A549 (cell line): ENCODE measurements at regions of chr9 and their contacts with region 1.

Region 1: DNA sequence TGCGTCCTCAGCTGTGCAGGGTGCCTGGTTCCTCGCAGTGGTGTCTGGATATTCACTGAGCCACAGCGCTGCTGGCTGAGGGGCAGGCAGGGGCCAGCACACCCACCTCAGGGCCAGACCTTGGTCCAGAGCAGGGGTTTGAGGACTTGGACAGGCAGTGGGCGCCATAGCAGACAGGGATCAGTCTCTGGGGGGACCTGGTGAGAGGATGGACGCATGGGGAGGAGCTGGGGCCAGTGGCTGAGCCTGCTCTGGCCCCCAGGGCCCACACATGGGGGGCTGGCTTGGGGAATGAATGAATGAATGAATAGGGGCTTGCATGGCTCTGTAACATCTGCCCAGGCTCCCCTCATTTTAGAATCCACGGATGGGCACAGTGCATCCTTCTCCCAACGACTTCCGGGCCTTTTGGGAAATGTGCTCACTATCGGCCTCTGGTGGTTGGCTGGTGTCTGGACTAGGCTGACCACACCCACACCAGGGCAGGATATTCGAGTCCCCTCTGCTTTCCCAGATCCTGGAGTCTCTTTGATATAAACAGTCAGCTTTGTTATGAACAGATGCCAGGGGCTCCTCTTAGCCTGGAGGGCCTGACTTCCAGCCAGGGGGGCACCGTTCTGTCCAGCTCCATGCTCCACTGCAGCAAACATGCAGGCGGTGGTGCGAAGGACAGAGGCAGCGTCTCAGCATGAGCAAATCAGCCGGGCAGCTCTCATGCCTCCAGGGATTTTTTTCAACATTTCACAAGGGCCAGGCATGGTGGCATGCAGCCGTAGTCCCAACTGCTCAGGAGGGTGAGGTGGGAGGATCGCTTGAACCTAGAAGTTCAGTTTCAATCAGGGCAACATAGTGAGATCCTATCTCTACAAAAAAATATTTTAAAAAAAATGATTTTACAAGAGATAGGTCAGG is 62.6 kb downstream of the NEK6 start:
- DNase-seq: peak; percentile 64 to 91
- ATAC-seq: peak; percentile 91 to 95
- H3K4me3 ChIP-seq: no peak overlapping the region
- H3K27ac ChIP-seq: peak overlapping the region; percentile 46 to 70; a peak in 4 of 6 replicates
- H3K4me1 ChIP-seq: 0 out of 3 replicates have a peak, but pooled peaks cover 3% of the 10 kb centered on the region
- CTCF ChIP-seq: peak; percentile 78
- EP300 ChIP-seq: no peak
- POLR2A ChIP-seq: no peak
- RAD21 ChIP-seq: peak; percentile 70 to 74

Region 2: GRCh38 chr9:124257844-124258606 is 62.3 kb before region 1 on chr9 and contains the start of gene NEK6:
- CTCF ChIA-PET with region 1: interaction called, 14 read pairs
- POLR2A ChIA-PET with region 1: no interaction called
- DNase-seq: no peak
- ATAC-seq: peak; percentile 10 to 27; a peak in 5 of 6 replicates
- H3K4me3 ChIP-seq: peak within 1 kb of the TSS; percentile 79
- H3K27ac ChIP-seq: peak within 1 kb of the TSS; percentile 84 to 100
- H3K4me1 ChIP-seq: peaks cover 48% of the 10 kb centered on the region
- CTCF ChIP-seq: no peak
- EP300 ChIP-seq: no peak
- POLR2A ChIP-seq: peak; percentile 35
- RAD21 ChIP-seq: no peak
- polyA plus RNA-seq, gene NEK6: 33.7 and 38.7 TPM in 2 replicates

Region 3: GRCh38 chr9:124302921-124303320 is 17.4 kb before region 1 on chr9:
- CTCF ChIA-PET with region 1: interaction called, 12 read pairs
- POLR2A ChIA-PET with region 1: no interaction called
- DNase-seq: no peak
- ATAC-seq: no peak
- H3K4me3 ChIP-seq: no peak overlapping the region
- H3K27ac ChIP-seq: peak overlapping the region in 1 of 2 experiments; percentile 89; a peak in 3 of 6 replicates
- H3K4me1 ChIP-seq: peaks cover 57% of the 10 kb centered on the region
- CTCF ChIP-seq: no peak
- EP300 ChIP-seq: no peak
- POLR2A ChIP-seq: no peak
- RAD21 ChIP-seq: no peak

Region 4: DNA sequence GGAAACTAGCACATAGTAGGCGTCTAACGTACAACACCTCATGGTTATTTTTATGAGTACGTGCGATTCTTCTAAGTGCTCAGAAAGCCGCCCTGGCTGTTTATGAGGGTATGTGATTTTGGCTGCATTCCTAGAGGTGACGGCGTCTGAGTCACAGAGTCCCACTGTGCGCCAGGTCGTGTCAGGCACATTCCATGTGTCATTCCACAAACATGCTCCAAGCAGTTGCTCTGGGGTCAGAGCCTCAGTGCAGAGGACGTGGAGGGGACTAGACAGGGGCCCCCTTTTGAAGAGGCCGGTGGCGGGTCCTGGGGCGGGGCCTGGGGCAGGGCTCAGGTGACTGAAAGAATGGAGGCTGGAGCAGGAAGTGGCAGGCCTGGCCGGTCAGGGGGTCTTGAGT is 10.7 kb before region 1 on chr9:
- CTCF ChIA-PET with region 1: interaction called, 11 read pairs
- POLR2A ChIA-PET with region 1: no interaction called
- DNase-seq: peak; percentile 88 to 89
- ATAC-seq: peak; percentile 76 to 86
- H3K4me3 ChIP-seq: no peak overlapping the region
- H3K27ac ChIP-seq: peak overlapping the region; percentile 80 to 92
- H3K4me1 ChIP-seq: peaks cover 54% of the 10 kb centered on the region
- CTCF ChIP-seq: no peak
- EP300 ChIP-seq: peak; percentile 59 to 84; a peak in 3 of 5 replicates
- POLR2A ChIP-seq: no peak
- RAD21 ChIP-seq: peak; percentile 25 to 38; a peak in 2 of 5 replicates

Region 5: DNA sequence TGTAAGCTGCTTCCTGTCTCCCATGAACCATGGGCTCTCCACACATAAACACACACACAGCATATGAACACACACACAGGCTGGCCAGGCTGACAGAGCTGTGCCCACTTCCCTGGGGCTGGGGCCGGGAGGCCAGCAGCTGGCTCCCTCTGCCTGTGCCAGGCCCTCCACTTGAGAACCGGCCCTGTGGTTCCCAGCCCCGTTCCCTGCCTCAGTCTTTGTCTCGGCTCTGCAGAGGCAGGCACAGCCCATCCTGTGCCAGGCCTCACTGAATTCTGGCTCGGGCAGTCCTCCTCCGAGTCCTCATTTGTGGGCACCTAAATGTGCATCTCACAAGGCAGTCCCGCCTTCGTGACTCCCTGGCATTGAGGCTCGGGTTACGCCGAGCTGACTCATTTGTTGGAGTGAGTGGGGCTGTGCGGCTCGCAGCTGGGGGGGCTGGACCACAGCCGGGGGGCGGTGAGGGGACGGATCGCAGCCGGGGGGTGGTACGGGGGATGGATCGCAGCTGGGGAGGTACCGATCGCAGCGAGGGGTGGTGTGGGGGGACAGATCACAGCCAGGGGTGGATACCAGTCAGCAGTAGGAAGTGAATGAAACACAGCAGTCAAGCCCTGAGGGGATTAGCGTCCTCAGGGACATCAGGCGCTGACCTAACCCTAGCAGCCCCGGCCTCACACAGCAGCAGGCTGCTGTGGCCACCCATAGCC is 22.6 kb after region 1 on chr9:
- CTCF ChIA-PET with region 1: interaction called, 10 read pairs
- POLR2A ChIA-PET with region 1: no interaction called
- DNase-seq: peak; percentile 29 to 30
- ATAC-seq: peak; percentile 36 to 53; a peak in 4 of 6 replicates
- H3K4me3 ChIP-seq: no peak overlapping the region
- H3K27ac ChIP-seq: peak overlapping the region; percentile 5 to 77; a peak in 4 of 6 replicates
- H3K4me1 ChIP-seq: peaks cover 12% of the 10 kb centered on the region
- CTCF ChIP-seq: no peak
- EP300 ChIP-seq: no peak
- POLR2A ChIP-seq: no peak
- RAD21 ChIP-seq: no peak

Region 6: GRCh38 chr9:124392871-124393460 is 72.6 kb after region 1 on chr9:
- CTCF ChIA-PET with region 1: interaction called, 10 read pairs
- POLR2A ChIA-PET with region 1: no interaction called
- DNase-seq: peak; percentile 87 to 89
- ATAC-seq: peak; percentile 88
- H3K4me3 ChIP-seq: 0 out of 3 replicates have a peak overlapping the region, but pooled peaks have one; percentile 6
- H3K27ac ChIP-seq: peak overlapping the region; percentile 68 to 84
- H3K4me1 ChIP-seq: peaks cover 69% of the 10 kb centered on the region
- CTCF ChIP-seq: peak; percentile 56
- EP300 ChIP-seq: peak in 1 of 2 experiments; percentile 68; a peak in 2 of 5 replicates
- POLR2A ChIP-seq: no peak
- RAD21 ChIP-seq: peak; percentile 58 to 70; a peak in 4 of 5 replicates